Activated B cell treated with CpG ODN at 0.5 μM for 24 hours (primary cell): ENCODE measurements at regions of chr1 and their contacts with region 1.

Region 1: DNA sequence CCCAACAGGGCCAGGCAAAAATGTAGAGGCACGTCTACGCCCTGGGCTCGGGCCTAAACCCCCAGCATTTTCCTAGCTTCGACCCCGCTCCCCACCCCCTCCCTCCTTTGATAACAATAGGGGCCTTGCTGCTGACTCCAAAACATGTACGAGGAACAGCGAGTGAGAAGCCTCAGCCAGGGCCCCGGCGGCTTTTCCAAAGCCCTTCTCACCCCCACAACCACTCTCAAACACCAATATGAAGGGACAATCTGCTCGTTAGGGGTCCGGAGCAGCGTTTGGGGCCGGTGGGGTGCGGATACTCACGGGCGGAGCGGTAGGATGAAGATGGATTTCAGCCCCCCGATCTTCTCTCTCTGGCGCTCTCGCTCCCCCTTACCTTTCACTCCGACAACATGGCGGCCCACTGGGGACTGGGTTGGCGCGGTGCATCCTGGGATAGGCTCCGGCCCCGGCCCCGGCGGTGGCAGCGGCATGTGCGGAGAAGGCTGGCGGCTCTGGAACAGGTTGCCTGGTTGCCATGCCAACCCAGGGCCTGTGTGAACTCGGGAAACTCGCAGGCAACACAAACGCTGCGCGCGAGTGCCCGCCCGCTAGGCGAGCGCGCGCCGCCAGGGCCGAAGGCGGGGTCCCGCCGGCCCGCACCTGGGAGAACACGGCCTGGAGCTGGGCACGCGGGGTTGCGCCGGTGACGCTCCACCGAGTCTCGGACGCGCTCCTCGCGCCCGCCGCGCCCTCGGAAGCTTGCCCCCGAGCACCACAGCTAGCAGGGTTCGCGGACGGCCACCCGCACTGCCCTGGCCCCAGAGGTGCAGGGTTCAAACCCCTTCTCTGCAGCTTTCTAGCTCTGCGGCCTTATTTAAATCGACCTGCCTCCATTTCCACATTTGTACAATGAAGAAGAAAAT is at the start of gene PUM1:
- DNase-seq: peak; percentile 97
- ATAC-seq: peak; percentile 94
- H3K4me3 Mint-ChIP-seq: peak within 1 kb of the TSS; percentile 99
- H3K27ac Mint-ChIP-seq: peak within 1 kb of the TSS; percentile 98
- H3K4me1 Mint-ChIP-seq: peaks cover 37% of the 10 kb centered on the region
- H3K27me3 Mint-ChIP-seq: no peaks in the 10 kb centered on the region
- CTCF ChIP-seq: no peak
- total RNA-seq, gene PUM1: 132 and 137 TPM in 2 replicates

Region 2: GRCh38 chr1:30790850-30791778 is 274.4 kb before region 1 on chr1:
- CTCF ChIA-PET with region 1: no interaction called
- POLR2A ChIA-PET with region 1: no interaction called
- intact Hi-C with region 1: loop called (anchors 10 kb)
- DNase-seq: no peak
- ATAC-seq: peak; percentile 82
- H3K4me3 Mint-ChIP-seq: peak overlapping the region; percentile 58
- H3K27ac Mint-ChIP-seq: peak overlapping the region; percentile 72
- H3K4me1 Mint-ChIP-seq: peaks cover 31% of the 10 kb centered on the region
- H3K27me3 Mint-ChIP-seq: peaks cover 12% of the 10 kb centered on the region
- CTCF ChIP-seq: no peak

Region 3: GRCh38 chr1:31010086-31010989 is 55.2 kb before region 1 on chr1:
- CTCF ChIA-PET with region 1: no interaction called
- POLR2A ChIA-PET with region 1: no interaction called
- intact Hi-C with region 1: loop called (anchors 5 kb)
- DNase-seq: no peak
- ATAC-seq: peak; percentile 43
- H3K4me3 Mint-ChIP-seq: no peak overlapping the region
- H3K27ac Mint-ChIP-seq: peak overlapping the region; percentile 32
- H3K4me1 Mint-ChIP-seq: peaks cover 71% of the 10 kb centered on the region
- H3K27me3 Mint-ChIP-seq: no peaks in the 10 kb centered on the region
- CTCF ChIP-seq: no peak

Region 4: DNA sequence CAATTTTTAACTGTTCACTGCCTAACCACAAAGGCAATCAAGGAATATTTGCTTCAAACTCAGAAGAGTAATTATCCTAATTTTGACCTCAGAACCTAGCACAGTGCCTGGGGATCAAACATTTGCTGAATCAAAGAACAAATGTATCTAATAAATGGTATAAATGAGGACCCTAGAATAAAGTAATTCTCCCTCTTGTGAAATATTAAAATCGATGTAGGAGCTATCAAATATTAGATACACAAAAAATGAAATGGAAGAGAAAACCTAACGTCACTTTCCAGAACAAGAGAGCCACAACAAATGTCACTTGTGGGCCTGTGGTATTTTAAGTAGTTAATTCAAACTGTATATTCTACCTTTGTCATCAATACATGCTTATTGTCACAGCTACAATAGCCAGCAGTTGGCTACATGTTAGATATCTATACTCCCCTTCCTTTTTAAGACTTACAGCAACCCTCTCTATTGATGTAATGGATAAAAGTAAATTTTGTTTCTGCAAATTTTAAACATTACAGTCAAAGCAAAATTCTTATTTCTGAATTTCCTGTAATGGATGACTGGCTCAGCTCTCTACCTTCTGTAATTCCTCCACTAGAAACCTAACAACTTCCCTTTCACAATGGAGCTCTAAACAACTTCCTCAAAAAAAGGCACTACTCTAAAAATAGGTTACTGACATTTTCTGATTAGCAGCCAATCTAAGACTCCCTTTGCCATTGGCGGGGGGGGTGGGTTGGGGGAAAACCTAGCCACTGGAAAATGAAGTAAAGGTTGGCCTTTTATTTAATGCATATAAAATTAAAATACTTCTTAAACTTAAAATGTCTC is 37.7 kb before region 1 on chr1:
- CTCF ChIA-PET with region 1: no interaction called
- POLR2A ChIA-PET with region 1: no interaction called
- intact Hi-C with region 1: loop called (anchors 5 kb)
- DNase-seq: no peak
- ATAC-seq: peak; percentile 70
- H3K4me3 Mint-ChIP-seq: peak overlapping the region; percentile 45
- H3K27ac Mint-ChIP-seq: peak overlapping the region; percentile 13
- H3K4me1 Mint-ChIP-seq: peaks cover 74% of the 10 kb centered on the region
- H3K27me3 Mint-ChIP-seq: no peaks in the 10 kb centered on the region
- CTCF ChIP-seq: no peak

Region 5: DNA sequence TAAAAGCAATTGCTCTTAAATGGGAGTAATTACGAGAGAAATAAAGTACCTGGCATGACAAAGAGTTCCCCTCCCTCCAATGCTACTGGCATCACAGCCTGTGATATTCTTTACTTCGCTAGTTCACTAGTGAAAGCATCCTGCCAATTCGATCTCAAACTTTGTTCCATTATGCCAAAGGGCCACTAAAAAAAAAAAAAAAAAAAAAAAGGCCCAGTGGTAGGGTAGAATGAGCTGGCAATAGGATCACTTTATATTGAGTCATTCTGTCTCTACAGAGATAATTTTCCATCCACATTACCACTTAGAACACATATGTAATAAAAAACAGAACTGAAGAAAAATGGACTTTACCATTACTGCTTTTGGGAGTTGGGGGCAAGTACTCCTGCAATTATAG is 11.2 kb before region 1 on chr1:
- CTCF ChIA-PET with region 1: no interaction called
- POLR2A ChIA-PET with region 1: interaction called, 4 read pairs
- intact Hi-C with region 1: loop called (anchors 2 kb)
- DNase-seq: no peak
- ATAC-seq: peak; percentile 20
- H3K4me3 Mint-ChIP-seq: no peak overlapping the region
- H3K27ac Mint-ChIP-seq: peak overlapping the region; percentile 18
- H3K4me1 Mint-ChIP-seq: peaks cover 55% of the 10 kb centered on the region
- H3K27me3 Mint-ChIP-seq: no peaks in the 10 kb centered on the region
- CTCF ChIP-seq: no peak

Region 6: DNA sequence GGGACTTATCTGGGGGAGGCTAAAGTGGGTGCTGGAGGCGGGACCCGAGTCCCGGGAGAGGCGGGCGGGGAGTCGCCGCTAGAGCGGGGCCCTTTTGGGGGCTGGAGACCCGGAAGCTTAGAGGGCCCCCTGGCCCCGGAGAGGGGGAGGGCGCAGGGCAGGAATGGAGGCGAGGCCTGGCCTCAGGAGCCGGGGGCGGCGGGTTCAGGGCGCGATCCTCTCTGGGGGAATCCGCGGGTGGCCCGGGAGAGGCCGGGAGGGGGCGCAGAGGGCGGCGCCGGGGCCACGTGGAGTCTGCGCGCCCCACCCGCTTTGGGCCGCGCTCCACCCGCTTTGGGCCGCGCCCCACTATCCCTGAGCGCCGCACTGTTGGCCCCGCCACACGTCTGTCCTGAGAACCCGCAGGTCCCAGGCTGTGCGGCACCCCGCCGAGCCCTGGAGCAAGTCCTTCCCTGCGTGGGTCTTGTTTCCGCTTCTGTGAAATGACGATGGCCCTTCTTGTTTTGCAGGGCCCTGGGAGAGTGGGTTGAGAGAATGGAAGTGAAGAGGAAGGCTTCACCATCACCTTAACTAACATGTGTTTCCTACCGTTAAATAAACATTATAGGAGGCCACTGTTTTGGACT is 89.8 kb after region 1 on chr1:
- CTCF ChIA-PET with region 1: no interaction called
- POLR2A ChIA-PET with region 1: interaction called, 3 read pairs
- intact Hi-C with region 1: loop called (anchors 1 kb)
- DNase-seq: peak; percentile 70
- ATAC-seq: peak; percentile 77
- H3K4me3 Mint-ChIP-seq: peak overlapping the region; percentile 85
- H3K27ac Mint-ChIP-seq: peak overlapping the region; percentile 70
- H3K4me1 Mint-ChIP-seq: peaks cover 11% of the 10 kb centered on the region
- H3K27me3 Mint-ChIP-seq: no peaks in the 10 kb centered on the region
- CTCF ChIP-seq: no peak

Region 7: DNA sequence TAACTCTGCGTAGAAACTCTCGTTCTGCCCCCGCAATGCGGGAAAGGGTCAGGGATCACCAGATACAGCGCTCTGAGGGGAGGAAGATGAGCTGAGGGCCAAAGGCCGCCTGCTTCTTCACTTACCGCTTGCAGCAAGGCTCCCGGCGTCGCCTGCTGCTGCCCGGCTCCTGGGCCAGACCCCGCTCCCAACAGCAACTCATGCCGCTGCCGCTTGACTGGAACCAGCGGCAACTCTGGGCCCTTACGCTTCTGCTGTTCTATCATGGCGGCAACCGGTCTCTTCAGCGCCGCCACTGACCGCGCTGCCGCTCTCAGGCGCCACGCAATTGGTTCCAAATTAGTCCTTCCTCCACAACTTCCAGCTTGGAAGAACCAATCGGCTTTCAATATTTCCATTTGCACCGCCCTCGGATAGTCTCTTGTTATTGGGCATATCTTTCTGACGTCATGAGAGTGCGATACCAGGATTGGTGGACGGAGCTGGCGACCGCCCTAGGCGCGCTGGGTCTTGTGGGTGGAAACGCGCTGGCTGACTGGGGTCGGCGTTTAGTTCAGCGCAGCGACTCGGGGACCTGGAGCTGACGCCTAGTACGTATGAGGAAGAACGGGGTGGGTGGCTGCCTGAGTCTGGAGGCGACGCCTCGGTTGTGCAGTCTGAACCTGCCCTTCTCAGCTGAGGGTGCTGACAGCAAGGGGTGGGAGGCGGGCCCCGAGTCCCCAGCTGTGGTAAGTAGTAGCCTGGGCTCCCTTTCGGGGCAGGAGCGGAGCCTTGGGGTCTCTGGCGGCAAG is 231.1 kb after region 1 on chr1 and contains the starts of genes SNRNP40 and ZCCHC17:
- CTCF ChIA-PET with region 1: no interaction called
- POLR2A ChIA-PET with region 1: no interaction called
- intact Hi-C with region 1: loop called (anchors 2 kb)
- DNase-seq: peak; percentile 79
- ATAC-seq: peak; percentile 96
- H3K4me3 Mint-ChIP-seq: no peak within 1 kb of the TSS
- H3K27ac Mint-ChIP-seq: no peak within 1 kb of the TSS
- H3K4me1 Mint-ChIP-seq: peaks cover 13% of the 10 kb centered on the region
- H3K27me3 Mint-ChIP-seq: no peaks in the 10 kb centered on the region
- CTCF ChIP-seq: no peak
- total RNA-seq, gene SNRNP40: 83.2 and 85.1 TPM in 2 replicates
- total RNA-seq, gene ZCCHC17: 19.5 and 19.9 TPM in 2 replicates

Region 8: DNA sequence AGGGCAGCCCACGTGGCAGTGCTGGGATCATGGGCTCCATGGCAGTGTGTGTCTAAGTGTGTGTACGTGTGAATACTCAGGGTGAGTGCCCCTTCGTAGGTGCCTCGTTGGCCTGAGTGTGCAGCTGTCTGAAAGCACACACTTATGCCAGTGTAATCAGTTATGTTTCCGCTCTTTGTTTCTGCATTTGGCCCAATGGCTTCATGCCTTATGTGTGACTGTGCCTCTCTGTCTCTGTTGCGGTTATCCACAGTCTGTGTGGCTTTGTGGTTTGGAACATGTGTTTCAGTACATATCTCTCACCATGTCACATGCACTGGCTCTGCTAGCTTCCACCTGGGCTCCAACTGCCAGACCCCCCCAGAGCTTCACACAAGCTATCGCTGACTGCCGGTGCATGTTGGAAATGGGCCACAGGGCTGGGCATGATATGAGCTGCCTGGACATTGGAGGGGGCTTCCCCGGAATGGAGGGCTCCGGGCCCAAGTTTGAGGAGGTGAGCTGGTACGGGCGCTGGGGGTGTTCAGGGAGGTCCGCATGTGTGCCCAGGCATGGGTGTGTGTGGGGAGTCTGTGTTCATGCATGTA is 440.4 kb after region 1 on chr1:
- CTCF ChIA-PET with region 1: no interaction called
- POLR2A ChIA-PET with region 1: no interaction called
- intact Hi-C with region 1: no loop called
- DNase-seq: no peak
- ATAC-seq: peak; percentile 47
- H3K4me3 Mint-ChIP-seq: no peak overlapping the region
- H3K27ac Mint-ChIP-seq: no peak overlapping the region
- H3K4me1 Mint-ChIP-seq: peaks cover 20% of the 10 kb centered on the region
- H3K27me3 Mint-ChIP-seq: peaks cover 6% of the 10 kb centered on the region
- CTCF ChIP-seq: no peak